Esophagus squamous epithelium (tissue), 5 donors: ENCODE measurements at regions of chr10 and their contacts with region 1.

Region 1: GRCh38 chr10:119686439-119687191 is 35.4 kb downstream of the BAG3 start:
- DNase-seq: no peak
- H3K4me3 ChIP-seq: peak overlapping the region in 3 of 4 donors; percentile 25 to 53 (median 33)
- H3K27ac ChIP-seq: peak overlapping the region; percentile 52 to 85 (median 80)
- H3K4me1 ChIP-seq: peaks cover 8 to 40% (median 17%) of the 10 kb centered on the region in 3 donors
- H3K27me3 ChIP-seq: no peaks in the 10 kb centered on the region
- CTCF ChIP-seq: peak; percentile 91 to 96 (median 94)
- POLR2A ChIP-seq: no peak

Region 2: DNA sequence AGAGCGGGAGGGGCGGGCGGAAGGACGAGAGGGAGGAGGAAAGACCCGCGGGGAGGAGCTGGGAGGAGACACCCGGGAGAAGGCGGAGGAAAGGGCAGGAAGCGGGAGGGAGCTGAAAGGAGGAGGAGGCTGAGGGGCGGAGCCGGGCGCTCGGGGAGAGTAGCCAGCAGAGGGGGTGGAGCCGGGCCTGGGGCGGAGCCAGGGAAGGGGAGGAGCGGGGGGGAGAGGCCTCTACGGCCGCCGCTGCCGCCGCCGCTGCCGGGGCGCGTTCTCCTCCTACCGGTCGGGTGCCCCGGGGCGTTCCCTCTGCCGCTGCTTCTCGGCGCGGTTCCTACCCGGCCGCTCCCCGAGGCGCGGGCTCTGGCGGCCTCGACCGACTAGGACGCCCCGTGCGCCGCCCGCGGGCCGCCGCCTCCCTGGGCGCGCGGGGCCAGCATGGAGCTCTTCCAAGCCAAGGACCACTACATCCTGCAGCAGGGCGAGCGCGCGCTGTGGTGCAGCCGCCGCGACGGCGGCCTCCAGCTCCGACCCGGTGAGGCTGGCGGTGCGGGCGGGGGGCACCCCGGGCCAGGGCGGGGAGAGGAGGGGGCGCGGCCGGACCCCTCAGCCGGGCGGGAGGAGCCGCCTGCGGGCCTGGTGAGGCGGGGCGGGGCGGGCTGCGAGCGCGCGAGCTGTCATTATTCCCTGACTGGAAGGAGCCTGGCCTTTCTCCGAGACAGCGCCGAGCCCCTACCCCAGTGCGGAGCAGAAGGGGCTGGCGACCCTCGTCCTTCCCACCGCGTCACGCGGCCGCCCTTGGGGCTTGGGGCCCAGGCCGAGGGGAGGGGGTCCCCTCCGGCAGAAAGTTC is 39.4 kb after region 1 on chr10 and contains the start of gene INPP5F:
- intact Hi-C with region 1: loop called (anchors 5 kb)
- DNase-seq: peak; percentile 95
- H3K4me3 ChIP-seq: peak within 1 kb of the TSS; percentile 59 to 93 (median 90)
- H3K27ac ChIP-seq: peak within 1 kb of the TSS; percentile 86 to 98 (median 92)
- H3K4me1 ChIP-seq: peaks cover 6 to 45% (median 23%) of the 10 kb centered on the region in 3 donors
- H3K27me3 ChIP-seq: no peaks in the 10 kb centered on the region
- CTCF ChIP-seq: peak in 3 of 6 experiments; percentile 18 to 39 (median 31)
- POLR2A ChIP-seq: peak in 2 of 4 donors; percentile 48 to 74
- total RNA-seq, gene INPP5F: 5.3 to 11.4 (median 9.4) TPM

Region 3: GRCh38 chr10:119770928-119771327 is 84.3 kb after region 1 on chr10:
- intact Hi-C with region 1: no loop called
- DNase-seq: no peak
- H3K4me3 ChIP-seq: no peak overlapping the region
- H3K27ac ChIP-seq: no peak overlapping the region
- H3K4me1 ChIP-seq: peaks cover 0 to 36% (median 22%) of the 10 kb centered on the region in 3 donors
- H3K27me3 ChIP-seq: no peaks in the 10 kb centered on the region
- CTCF ChIP-seq: no peak
- POLR2A ChIP-seq: no peak

Region 4: GRCh38 chr10:119859420-119860258 is 173.0 kb after region 1 on chr10:
- intact Hi-C with region 1: loop called (anchors 10 kb)
- DNase-seq: no peak
- H3K4me3 ChIP-seq: no peak overlapping the region
- H3K27ac ChIP-seq: no peak overlapping the region
- H3K4me1 ChIP-seq: peaks cover 0 to 21% (median 3%) of the 10 kb centered on the region in 3 donors
- H3K27me3 ChIP-seq: no peaks in the 10 kb centered on the region
- CTCF ChIP-seq: peak; percentile 43 to 69 (median 54)
- POLR2A ChIP-seq: no peak

Region 5: DNA sequence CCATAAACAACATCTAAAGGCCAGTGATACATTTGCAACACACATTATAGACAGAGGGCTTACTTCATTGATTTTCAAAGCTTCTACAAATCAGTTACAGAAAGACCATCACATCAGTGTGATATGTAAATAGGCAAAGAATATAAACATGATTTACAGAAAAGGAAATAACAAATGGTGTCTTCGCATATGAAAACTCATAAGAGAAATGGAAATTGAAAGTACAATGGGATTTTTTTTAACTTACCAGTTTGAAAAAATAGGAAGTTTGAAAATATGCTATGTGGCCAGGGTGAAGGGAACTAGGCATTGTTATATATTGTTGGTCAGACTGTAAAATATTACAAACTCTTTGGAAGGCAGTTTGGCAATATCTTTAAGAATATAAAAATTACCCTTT is 233.2 kb after region 1 on chr10:
- intact Hi-C with region 1: no loop called
- DNase-seq: no peak
- H3K4me3 ChIP-seq: no peak overlapping the region
- H3K27ac ChIP-seq: no peak overlapping the region
- H3K4me1 ChIP-seq: peaks cover 0 to 14% (median 0%) of the 10 kb centered on the region in 3 donors
- H3K27me3 ChIP-seq: no peaks in the 10 kb centered on the region
- CTCF ChIP-seq: no peak
- POLR2A ChIP-seq: no peak